ENCODE measurements at regions of chr12 and their contacts with region 1.

Region 1: DNA sequence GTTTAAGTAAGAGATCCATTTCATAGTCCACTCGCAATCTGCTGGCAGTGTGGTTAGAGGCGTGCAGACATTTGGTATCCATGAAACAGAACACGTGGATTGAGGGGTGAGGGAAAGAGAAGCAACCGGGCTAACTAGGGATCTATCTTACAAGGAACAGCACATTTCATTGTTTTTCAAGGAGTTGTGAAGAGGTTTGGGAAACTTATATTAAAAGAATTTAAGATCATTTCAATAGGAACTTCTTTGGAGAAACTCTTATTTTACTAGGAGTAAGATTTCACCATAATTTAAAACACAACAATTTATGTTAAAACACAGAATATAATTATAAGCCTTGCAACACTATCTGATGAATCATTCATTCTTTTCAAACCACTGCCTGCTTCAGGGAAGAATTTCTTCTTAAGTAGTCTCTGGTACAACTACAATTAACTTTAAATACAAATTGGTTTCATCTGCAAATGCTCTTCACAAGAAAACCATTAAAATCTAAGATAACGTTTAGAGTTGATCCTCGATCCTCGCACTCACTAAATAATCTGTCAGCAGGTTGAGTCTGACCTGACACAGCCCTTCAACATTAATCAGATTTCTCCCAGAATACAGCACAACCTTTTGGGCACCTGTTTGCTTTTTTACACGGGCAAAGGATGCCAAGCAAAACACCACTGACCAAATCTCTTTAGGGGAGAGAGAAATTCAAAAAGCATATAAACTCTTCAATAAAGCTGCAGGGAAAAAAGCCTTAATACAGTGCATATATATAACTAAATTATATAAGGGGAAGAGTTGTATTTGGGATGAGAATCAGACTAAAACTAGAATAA is 27.3 kb downstream of the PPTC7 start:
- DNase-seq: peak; percentile 45
- H3K4me3 ChIP-seq: no peak overlapping the region; the same call in 1 of the 2 replicates
- CTCF ChIP-seq: no peak

Region 2: DNA sequence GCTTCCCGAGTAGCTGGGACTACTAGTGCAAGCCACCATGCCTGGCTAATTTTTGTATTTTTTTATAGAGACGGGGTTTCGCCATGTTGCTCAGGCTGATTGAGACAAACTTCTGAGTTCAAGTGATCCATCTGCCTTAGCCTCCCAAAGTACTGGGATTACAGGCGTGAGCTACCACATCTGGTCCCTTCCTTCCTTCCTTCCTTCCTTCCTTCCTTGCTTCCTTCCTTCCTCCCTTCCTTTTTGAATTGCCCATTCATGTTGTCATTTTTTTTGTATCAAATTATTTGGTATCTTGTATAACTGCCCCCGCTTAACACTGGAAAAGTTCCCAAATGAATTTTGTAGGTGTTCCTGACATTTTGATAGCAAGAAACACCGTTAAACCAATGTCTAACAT is 42.0 kb before region 1 on chr12:
- CTCF ChIA-PET with region 1: interaction called, 18 read pairs
- POLR2A ChIA-PET with region 1: no interaction called
- DNase-seq: no peak
- H3K4me3 ChIP-seq: no peak overlapping the region
- CTCF ChIP-seq: no peak

Region 3: DNA sequence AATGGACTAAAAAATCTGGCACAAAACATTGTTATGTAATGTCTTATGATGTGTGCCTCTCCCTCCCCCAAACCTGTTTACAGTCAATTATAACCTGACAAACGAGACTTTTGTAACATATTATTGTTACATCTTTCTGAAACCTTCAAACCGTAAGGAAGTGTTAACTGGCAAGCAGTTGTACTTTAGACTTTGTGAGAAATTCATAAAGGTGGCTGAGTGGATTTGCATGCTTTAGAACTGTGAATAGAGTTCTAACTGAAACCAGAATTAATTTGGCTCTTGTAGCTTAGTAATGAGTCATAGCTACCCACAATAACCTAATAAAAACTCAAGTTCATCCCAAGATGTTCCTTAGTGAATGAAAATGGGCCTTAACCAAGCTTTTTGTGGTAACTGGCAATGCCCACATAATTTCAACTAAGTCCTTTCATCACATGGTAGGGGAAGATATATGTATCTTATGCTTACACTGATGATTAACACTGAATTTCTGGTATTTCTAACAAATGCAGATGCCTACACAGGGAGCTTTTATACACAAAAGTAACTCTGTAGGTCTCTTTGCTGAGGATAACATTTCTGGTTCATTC is 24.0 kb before region 1 on chr12:
- CTCF ChIA-PET with region 1: interaction called, 27 read pairs
- POLR2A ChIA-PET with region 1: no interaction called
- DNase-seq: no peak
- H3K4me3 ChIP-seq: no peak overlapping the region
- CTCF ChIP-seq: no peak

Region 4: GRCh38 chr12:110565919-110566871 is 10.4 kb after region 1 on chr12:
- CTCF ChIA-PET with region 1: interaction called, 18 read pairs
- POLR2A ChIA-PET with region 1: no interaction called
- DNase-seq: no peak
- H3K4me3 ChIP-seq: no peak overlapping the region
- CTCF ChIP-seq: no peak

Region 5: GRCh38 chr12:110577717-110578521 is 22.1 kb after region 1 on chr12:
- CTCF ChIA-PET with region 1: interaction called, 18 read pairs
- POLR2A ChIA-PET with region 1: no interaction called
- DNase-seq: no peak
- H3K4me3 ChIP-seq: peak overlapping the region; percentile 32
- CTCF ChIP-seq: no peak

Region 6: DNA sequence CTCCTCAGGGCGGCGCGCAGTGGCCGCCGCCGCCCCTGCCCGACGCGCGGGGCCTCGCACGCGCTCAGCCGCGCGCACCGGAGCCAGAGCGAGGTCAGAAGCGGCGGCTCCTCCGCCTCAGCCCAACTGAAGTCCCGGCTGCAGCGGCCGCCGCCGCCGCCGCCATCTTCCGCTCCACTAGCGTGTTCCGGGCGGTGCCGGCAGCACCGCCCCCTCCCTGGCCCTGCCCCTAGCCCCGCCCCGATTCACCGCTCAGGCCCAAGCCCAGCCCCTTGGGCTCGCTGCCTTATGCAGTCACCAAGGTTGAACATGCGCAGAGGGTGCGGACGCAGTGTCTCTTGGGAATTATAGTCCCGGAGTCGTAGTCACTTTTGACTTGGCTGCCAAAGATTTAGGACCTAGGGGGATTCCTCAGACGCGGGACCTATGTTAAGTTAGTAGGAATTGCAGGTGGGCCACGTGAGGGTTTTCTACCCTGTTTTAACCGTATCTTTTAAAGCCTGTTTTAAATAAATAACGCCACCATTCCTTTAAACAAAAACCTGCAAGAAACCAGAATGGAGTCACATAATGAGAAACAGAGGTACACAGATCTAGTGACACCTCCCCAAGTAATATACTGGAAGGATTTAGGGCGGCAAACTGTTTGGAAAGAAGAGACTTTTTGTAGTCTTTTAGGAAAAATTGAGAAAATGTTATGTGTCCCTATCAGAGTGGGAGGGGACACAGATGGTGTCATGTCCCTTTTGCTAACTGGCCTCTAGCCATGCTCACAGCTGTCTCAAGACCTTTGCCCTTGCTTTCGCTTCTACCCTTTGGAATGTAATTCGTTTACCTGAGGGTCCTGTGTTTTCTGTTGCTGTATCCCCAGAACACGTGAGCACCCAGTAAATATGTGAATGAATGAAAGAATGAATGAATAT is 27.6 kb after region 1 on chr12 and contains the start of gene PPTC7:
- CTCF ChIA-PET with region 1: interaction called, 18 read pairs
- POLR2A ChIA-PET with region 1: no interaction called
- DNase-seq: peak; percentile 73
- H3K4me3 ChIP-seq: peak within 1 kb of the TSS; percentile 90
- CTCF ChIP-seq: no peak